ENCODE measurements at regions of chr20 and their contacts with region 1.

Region 1: DNA sequence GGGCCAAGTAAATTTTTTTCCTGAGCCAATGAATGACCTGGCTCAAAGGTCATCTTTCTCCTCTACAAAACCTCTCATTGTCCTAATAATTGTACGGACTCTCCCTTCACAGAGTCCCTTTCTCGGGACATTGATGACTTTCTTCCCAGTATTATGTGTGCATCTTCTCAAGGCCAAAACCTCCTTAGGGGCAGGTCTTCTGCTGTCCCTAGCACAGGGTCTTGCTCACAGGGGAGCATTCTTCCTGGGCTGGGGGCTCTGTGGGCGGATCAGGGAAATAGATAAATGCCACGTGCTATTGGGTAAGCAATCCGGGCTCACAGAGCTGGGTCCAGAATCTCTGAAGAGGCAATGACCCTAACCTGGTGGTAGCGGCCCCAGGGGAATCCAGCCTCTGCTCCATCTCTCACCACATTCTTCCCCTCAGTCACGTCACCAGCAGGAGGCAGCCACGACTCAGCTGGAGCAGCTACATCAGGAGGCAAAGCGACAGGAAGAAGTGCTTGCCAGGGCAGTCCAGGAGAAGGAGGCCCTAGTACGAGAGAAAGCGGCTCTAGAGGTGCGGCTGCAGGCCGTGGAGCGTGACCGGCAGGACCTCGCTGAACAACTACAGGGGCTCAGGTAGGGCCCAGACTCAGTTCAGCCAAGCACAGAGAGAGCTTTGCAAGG is 23.5 kb downstream of the CEP250 start:
- DNase-seq: no peak
- H3K4me3 ChIP-seq: no peak overlapping the region
- H3K27ac ChIP-seq: no peak overlapping the region
- H3K4me1 ChIP-seq: no peaks in the 10 kb centered on the region
- H3K27me3 ChIP-seq: no peaks in the 10 kb centered on the region
- CTCF ChIP-seq: no peak
- POLR2A ChIP-seq: no peak

Region 2: GRCh38 chr20:35232575-35232974 is 246.4 kb before region 1 on chr20:
- intact Hi-C with region 1: no loop called
- DNase-seq: no peak
- H3K4me3 ChIP-seq: no peak overlapping the region
- H3K27ac ChIP-seq: no peak overlapping the region
- H3K4me1 ChIP-seq: no peaks in the 10 kb centered on the region
- H3K27me3 ChIP-seq: no peaks in the 10 kb centered on the region
- CTCF ChIP-seq: no peak
- POLR2A ChIP-seq: no peak

Region 3: DNA sequence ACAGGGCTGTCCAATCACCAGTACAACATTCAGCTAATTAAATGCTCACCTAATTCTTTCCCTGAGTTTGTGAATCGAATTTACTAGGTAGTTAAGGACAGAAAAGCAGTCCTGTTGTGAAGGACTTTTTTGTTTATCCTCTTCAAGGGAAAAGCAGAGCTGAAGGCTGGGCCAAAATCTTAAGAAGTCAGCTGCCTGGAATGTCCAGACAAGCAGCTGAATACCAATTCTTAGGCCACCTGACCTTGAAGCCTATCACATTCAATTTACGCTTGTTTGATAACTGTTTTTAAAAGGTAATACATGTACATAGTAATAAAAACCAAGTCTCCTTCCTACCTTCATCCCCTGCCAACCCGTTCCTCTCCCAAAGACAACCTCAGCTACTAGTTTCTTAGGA is 123.6 kb before region 1 on chr20:
- intact Hi-C with region 1: no loop called
- DNase-seq: peak in 2 of 7 donors; percentile 19 to 20
- H3K4me3 ChIP-seq: no peak overlapping the region
- H3K27ac ChIP-seq: peak overlapping the region in 2 of 5 donors; percentile 11 to 41
- H3K4me1 ChIP-seq: peaks cover 0 to 9% of the 10 kb centered on the region in 2 donors
- H3K27me3 ChIP-seq: no peaks in the 10 kb centered on the region
- CTCF ChIP-seq: no peak
- POLR2A ChIP-seq: no peak

Region 4: DNA sequence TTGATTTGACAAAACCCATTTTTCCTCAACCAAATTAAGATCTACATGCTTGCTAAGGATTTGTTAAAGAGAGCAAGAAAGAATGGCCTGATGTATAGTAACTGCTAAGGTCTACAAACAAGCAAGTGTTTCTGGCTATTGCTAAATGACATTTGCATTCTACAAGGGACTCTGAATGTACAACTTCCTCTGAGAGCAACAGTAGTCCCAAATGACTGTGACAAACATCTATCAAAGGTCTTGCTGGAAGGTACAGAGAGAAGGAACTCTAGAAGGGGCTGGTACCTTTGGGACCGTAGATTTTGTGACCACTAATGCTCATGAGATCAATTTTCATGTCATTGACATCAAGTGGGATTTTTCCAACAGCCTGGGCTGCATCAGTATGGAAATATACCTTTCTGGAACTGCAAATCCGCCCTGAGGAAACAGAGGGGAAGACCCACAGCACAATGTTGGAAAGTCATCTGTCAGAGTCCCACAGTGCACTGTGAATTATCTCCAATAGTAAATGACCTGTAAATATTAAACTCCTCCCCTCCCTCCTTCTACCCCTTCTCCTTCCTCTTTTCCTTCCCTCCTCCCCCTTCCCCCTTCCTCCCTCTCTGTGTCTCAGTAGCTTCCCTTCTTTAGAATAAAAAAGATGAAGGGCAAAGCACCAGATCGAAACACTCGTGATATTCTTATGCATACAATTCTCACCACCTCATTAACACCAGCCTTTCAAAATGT is 201.7 kb after region 1 on chr20:
- intact Hi-C with region 1: loop called in 1 of 2 experiments (anchors 10 kb)
- DNase-seq: peak in 1 of 7 donors; percentile 10
- H3K4me3 ChIP-seq: no peak overlapping the region
- H3K27ac ChIP-seq: no peak overlapping the region
- H3K4me1 ChIP-seq: no peaks in the 10 kb centered on the region
- H3K27me3 ChIP-seq: no peaks in the 10 kb centered on the region
- CTCF ChIP-seq: no peak
- POLR2A ChIP-seq: no peak